Sigmoid colon (tissue), 7 donors: ENCODE measurements at regions of chrX and their contacts with region 1.

Region 1: DNA sequence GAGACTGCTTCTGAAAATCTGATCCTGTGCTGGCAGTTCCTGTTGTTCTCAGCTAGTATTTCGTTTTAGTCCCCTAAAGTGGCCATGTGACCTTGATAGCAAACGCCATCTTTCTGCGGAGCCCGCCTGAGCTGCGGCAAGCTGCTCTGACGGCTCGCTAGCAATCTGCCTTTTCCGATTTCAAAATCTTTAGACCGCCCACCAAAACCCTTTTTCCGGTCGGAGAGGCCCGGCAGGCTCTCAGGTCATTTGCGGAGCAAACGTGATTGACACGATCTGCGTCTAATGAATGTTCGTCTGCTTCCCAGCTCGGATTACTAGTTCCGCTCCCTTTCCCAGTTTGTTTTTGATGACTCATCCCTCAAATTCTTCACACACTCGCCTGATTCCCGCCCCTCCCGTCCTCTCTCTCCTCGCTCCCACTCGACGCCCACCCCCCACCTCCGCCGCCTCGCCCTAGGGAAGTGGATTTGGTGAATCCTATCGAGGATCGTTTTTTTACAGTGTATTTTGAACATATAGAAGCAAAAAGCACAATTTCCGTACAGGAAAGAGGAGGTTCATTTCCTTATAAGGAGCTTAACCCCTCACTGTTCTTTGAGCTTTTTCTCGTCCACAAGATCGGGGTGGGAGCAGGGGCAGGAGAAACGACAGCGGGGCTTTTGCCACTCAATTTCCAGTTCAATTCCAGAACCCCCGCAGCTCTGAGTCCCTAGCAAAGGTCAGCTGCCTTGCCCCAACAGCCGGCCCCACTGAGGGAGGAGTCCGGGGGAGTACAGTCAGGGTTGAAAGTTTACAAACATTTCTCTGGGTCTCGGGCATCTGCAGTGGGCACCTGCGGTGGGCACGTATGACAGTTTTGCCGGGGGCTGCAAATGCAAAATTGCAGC is 37.5 kb downstream of the NLGN3 start:
- DNase-seq: peak; percentile 94
- H3K4me3 ChIP-seq: peak overlapping the region; percentile 27 to 51 (median 49)
- H3K27ac ChIP-seq: peak overlapping the region; percentile 84 to 90 (median 86)
- H3K4me1 ChIP-seq: peaks cover 0 to 6% (median 5%) of the 10 kb centered on the region in 4 donors
- H3K27me3 ChIP-seq: no peaks in the 10 kb centered on the region
- CTCF ChIP-seq: no peak
- EP300 ChIP-seq: no peak
- POLR2A ChIP-seq: peak; percentile 44 to 65

Region 2: GRCh38 chrX:70769659-70770232 is 412.4 kb before region 1 on chrX:
- intact Hi-C with region 1: loop called (anchors 5 kb)
- DNase-seq: no peak
- H3K4me3 ChIP-seq: no peak overlapping the region
- H3K27ac ChIP-seq: no peak overlapping the region
- H3K4me1 ChIP-seq: no peaks in the 10 kb centered on the region
- H3K27me3 ChIP-seq: no peaks in the 10 kb centered on the region
- CTCF ChIP-seq: no peak
- EP300 ChIP-seq: no peak
- POLR2A ChIP-seq: no peak

Region 3: GRCh38 chrX:70998411-70999027 is 183.6 kb before region 1 on chrX:
- intact Hi-C with region 1: loop called (anchors 5 kb)
- DNase-seq: no peak
- H3K4me3 ChIP-seq: no peak overlapping the region
- H3K27ac ChIP-seq: no peak overlapping the region
- H3K4me1 ChIP-seq: no peaks in the 10 kb centered on the region
- H3K27me3 ChIP-seq: no peaks in the 10 kb centered on the region
- CTCF ChIP-seq: no peak
- EP300 ChIP-seq: no peak
- POLR2A ChIP-seq: no peak

Region 4: DNA sequence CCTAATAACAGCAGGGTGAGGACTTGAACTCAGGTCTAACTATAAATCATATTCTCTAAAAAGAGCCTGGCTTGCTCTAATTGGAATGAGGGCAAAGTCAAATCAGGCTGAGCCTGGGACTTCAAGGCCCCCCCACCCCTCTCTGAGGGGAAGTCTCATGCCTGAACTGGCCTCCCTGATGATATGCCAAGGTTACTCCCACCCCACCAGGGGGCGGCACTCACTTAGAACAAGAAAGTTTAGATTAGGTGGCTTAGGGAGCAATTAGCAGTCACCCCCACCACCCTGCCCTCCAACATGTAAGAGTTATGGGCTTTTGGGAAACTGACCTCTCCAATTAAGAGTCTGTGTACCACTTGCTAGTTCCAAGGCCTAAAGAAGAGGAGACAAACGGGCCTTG is 83.9 kb before region 1 on chrX:
- intact Hi-C with region 1: loop called (anchors 1 kb)
- DNase-seq: peak; percentile 77
- H3K4me3 ChIP-seq: no peak overlapping the region
- H3K27ac ChIP-seq: no peak overlapping the region
- H3K4me1 ChIP-seq: peaks cover 0 to 22% (median 10%) of the 10 kb centered on the region in 4 donors
- H3K27me3 ChIP-seq: no peaks in the 10 kb centered on the region
- CTCF ChIP-seq: peak in 3 of 4 experiments; percentile 21 to 42 (median 38)
- EP300 ChIP-seq: no peak
- POLR2A ChIP-seq: no peak

Region 5: DNA sequence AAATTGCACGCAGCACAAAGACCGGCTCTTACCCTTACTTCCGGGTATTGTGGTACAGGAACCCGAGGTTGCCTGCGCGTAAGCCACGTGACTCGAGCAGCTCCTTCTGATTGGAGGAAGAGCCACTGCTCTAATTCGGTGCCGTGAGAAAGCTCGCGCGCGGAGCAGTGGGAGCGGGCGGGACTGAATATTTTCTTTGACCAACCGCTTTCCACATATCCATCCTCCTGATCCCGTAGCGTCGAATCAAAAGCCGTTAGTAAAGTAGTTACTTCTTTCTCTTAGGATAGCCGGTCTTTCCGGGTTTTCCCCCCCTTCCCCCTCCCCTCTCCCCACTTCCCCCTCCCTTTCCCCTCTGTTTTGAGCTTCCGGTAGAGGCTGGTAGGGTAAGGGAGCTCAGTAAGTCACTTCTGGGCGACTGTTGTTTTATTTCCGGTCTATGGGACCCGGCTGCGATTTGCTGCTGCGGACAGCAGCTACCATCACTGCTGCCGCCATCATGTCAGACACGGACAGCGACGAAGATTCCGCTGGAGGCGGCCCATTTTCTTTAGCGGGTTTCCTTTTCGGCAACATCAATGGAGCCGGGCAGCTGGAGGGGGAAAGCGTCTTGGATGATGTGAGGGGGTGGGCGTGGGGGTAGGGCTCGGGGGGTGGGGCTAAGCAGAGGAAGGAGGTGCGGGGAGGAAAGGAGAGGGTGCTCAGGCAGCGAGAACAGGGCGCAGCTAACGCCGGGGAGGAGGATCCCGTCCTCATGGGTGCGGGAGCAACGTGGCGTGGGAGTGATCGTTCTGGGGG is 183.9 kb after region 1 on chrX and contains the start of gene TAF1:
- intact Hi-C with region 1: loop called (anchors 5 kb)
- DNase-seq: peak; percentile 98
- H3K4me3 ChIP-seq: peak within 1 kb of the TSS; percentile 48 to 71 (median 68)
- H3K27ac ChIP-seq: peak within 1 kb of the TSS; percentile 87 to 94 (median 90)
- H3K4me1 ChIP-seq: peaks cover 0 to 13% (median 11%) of the 10 kb centered on the region in 4 donors
- H3K27me3 ChIP-seq: no peaks in the 10 kb centered on the region
- CTCF ChIP-seq: no peak
- EP300 ChIP-seq: no peak
- POLR2A ChIP-seq: peak in 1 of 2 donors; percentile 12
- total RNA-seq, gene TAF1: 40.7 to 47.4 (median 43.6) TPM